Activated CD8-positive, alpha-beta memory T cell treated with anti-CD3 and anti-CD28 coated beads, Interleukin-2, amount 10 ng/mL, durations not matched to agents 7 days and 5 days (primary cell): ENCODE measurements at regions of chr6 and their contacts with region 1.

Region 1: DNA sequence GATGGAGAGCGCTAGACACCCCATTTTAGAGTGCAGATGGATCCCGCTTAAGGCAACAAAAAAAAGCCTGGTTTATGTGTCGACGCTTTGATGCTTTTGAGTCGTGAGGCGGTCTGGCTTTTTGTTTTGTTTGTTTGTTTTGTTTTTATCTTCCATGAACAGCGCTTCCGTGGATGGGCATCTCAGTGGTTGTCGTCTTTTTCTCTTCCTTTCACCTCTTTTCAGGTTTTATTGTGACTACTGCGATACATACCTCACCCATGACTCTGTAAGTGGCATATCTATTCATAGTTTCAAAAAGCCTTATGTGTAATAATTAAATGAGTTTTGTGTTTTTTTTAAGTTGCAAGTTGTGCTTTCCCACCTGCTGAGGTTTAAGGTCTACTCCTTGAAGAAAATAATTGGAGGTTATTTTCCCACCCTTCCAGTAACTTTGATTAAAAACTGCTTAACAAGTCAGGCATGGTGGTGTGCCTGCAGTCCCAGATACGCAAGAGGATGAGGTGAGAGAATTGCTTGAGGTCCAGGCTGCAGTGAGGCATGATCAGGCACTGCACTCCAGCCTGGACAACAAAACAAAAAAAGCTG is 476 bp downstream of the SNRPC start:
- DNase-seq: no peak
- ATAC-seq: no peak
- H3K4me3 Mint-ChIP-seq: no peak overlapping the region
- H3K27ac Mint-ChIP-seq: no peak overlapping the region
- H3K4me1 Mint-ChIP-seq: peaks cover 16% of the 10 kb centered on the region
- H3K27me3 Mint-ChIP-seq: no peaks in the 10 kb centered on the region

Region 2: DNA sequence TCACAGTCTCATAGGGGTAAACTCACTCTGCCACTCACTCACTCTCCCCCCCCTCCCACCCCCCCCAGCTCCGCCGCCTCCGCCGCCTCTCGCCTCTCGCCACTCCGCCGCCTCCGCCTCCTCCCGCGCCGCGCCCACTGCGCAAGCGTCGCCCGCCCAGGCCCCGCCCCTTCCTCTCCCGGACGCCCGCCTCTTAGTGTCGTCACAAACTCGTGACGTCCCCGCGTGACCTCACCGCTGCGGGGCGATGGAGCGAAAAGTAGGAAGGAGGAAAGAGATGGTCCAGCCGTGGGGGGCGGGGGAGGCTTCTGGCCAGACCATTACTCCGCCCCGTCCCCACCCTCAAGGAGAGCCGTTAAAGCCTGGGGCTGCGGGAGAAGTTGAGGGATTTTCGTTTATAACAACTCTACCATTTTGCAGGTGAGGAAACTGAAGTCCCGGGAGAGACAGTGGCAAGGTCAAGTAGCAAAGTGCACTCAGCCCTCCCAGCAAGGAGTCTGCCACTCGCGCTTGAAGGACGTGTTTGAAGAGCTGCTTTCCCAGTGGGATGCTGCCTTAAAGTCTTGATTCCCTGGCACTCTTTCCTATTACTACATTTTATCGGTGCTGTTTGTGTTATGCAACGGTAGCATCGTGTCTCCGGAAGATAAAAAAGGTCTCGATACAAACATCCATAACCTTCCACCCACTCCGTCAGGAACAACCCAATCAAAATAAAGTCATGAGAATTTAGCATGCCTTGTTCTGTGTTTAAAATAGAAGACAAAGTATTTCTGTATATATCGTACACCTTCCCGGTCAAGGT is 60.8 kb before region 1 on chr6 and contains the start of gene ILRUN:
- CTCF ChIA-PET with region 1: no interaction called
- DNase-seq: peak; percentile 97
- ATAC-seq: peak; percentile 90
- H3K4me3 Mint-ChIP-seq: peak within 1 kb of the TSS; percentile 96
- H3K27ac Mint-ChIP-seq: peak within 1 kb of the TSS; percentile 98
- H3K4me1 Mint-ChIP-seq: peaks cover 43% of the 10 kb centered on the region
- H3K27me3 Mint-ChIP-seq: peaks cover 2% of the 10 kb centered on the region
- total RNA-seq, gene ILRUN: 73.7 to 79.8 TPM

Region 3: DNA sequence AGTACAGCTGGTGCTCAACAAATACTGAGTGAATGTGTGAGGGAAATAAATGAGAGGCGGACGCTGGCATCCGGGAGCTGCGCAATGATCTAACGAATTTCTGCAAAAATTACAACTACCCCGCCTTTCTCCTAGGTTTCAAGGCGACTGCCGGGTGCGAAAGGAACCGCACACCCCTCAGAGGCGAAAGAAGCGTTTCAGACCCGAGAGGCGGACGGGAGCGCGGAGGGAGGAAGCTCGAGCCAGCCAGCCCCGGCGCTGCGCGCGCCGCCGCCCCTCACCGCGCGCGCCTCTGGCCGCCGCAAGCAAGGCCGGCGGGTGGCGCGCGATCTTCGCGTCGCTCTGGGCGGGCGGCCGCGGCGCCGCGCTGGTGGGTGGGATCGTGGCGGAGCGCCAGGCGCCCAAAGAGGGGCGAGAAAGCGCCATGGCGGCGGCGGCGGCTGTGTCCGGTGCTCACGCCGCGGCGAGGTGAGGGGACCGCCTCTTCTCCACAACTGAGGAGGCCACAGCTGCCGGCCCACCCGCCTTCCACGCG is 34.0 kb after region 1 on chr6 and contains the start of gene BLTP3A:
- CTCF ChIA-PET with region 1: interaction called, 16 read pairs
- DNase-seq: peak; percentile 80
- ATAC-seq: peak; percentile 96
- H3K4me3 Mint-ChIP-seq: peak within 1 kb of the TSS; percentile 96
- H3K27ac Mint-ChIP-seq: peak within 1 kb of the TSS; percentile 93
- H3K4me1 Mint-ChIP-seq: peaks cover 24% of the 10 kb centered on the region
- H3K27me3 Mint-ChIP-seq: no peaks in the 10 kb centered on the region
- total RNA-seq, gene BLTP3A: 14.4 to 15.7 TPM